ENCODE measurements at regions of chr22 and their contacts with region 1.

Region 1: DNA sequence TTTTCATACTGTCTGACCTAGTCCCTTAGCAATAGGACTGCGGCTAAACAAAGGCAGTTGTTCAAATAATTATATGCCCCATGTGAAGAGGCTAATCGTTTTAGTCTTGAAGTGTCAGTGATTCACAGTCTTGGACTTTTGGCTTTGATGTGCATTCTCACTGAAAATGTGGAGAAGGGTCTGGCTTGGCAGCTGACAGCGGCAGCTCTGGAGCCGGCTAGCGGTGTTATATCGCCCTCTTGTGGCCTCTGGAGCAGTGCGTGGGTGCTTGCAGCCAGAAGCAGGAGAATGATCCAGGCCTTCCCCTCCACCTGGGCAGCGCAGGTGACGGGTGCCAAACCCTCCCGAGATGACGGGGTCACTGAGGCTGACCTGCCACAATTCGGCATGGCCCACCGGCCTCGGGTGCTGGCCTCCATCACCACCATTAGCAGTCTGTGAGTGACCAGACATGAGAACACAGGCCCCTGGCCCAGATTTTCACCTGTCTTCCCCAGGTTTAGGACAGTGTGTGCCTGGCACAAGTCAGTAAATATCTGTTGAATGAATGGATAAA is 90.3 kb upstream of the PITPNB start:
- DNase-seq: peak; percentile 78 to 80
- H3K4me3 ChIP-seq: no peak overlapping the region
- H3K27ac ChIP-seq: no peak overlapping the region
- H3K4me1 ChIP-seq: no peaks in the 10 kb centered on the region
- H3K27me3 ChIP-seq: no peaks in the 10 kb centered on the region
- CTCF ChIP-seq: peak; percentile 90 to 98 (median 95)
- POLR2A ChIP-seq: no peak

Region 2: DNA sequence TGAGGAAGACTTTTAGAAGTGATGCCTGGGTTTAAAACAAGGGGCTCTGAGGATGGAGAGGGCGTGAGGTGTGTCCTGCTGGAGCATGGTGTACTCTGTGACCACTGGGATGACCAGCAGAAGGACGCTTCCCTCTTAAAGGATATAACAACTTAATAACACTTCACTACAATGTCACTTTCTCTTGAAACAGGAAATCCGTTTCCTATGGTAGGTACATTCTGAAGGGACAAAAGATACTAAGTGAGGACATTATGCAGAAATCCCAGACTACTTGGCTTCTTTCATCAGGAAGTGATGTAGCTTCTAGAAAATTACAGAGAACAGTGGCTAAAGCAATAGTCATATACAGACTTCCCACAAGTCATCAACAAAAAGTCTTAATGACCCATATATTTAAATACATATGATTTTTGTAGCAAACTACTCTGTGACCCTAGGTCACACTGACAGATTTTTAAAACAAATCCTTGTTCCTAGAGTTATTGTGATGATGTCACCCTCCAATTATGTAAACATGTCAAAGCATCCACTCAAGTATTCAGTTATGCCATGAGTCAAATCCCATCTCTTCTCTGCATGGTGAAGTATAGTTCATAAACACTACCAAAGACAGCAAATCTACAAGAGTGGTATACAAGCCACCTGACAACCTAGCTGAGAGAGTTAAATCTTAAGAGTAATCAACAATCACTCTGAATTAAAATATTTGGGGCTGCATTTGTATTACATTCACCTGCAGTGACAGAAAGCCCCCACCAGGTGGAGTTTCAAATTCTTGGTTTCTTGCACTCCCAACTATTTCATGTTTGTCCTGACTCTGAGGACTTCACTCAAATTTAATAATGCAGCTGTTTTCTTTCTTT is 123.1 kb before region 1 on chr22:
- intact Hi-C with region 1: loop called (anchors 5 kb)
- DNase-seq: peak in 1 of 2 donors; percentile 57
- H3K4me3 ChIP-seq: no peak overlapping the region
- H3K27ac ChIP-seq: peak overlapping the region; percentile 36 to 71
- H3K4me1 ChIP-seq: peaks cover 0 to 5% of the 10 kb centered on the region in 2 donors
- H3K27me3 ChIP-seq: no peaks in the 10 kb centered on the region
- CTCF ChIP-seq: peak; percentile 72 to 86 (median 82)
- POLR2A ChIP-seq: no peak

Region 3: GRCh38 chr22:27919222-27919941 is 90.0 kb before region 1 on chr22 and contains the start of gene PITPNB:
- intact Hi-C with region 1: no loop called
- DNase-seq: peak; percentile 97 to 99
- H3K4me3 ChIP-seq: peak within 1 kb of the TSS; percentile 88 to 95
- H3K27ac ChIP-seq: peak within 1 kb of the TSS; percentile 96 to 98
- H3K4me1 ChIP-seq: peaks cover 0 to 3% of the 10 kb centered on the region in 2 donors
- H3K27me3 ChIP-seq: no peaks in the 10 kb centered on the region
- CTCF ChIP-seq: peak in 1 of 4 experiments; percentile 12
- POLR2A ChIP-seq: peak; percentile 80 to 94
- total RNA-seq, gene PITPNB: 47.9 to 99.2 (median 62.5) TPM

Region 4: DNA sequence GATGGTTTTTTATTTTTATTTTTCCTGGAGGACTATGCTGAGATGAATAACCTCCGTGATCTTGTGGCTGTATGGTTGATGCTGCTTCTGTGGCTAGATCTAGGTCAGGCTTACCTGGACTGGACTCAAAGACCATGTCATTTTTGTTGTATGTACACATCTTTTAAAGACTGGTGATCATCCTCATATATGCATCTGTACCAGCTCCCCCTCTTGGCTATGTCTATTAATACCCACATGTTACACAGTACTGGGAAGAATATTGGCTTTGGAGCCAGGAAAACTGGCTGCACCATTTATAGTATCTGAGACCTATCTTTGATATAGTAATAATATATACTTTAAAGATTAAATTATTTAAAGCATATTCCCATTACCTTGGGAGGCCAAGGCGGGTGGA is 71.9 kb before region 1 on chr22:
- intact Hi-C with region 1: no loop called
- DNase-seq: no peak
- H3K4me3 ChIP-seq: no peak overlapping the region
- H3K27ac ChIP-seq: no peak overlapping the region
- H3K4me1 ChIP-seq: no peaks in the 10 kb centered on the region
- H3K27me3 ChIP-seq: no peaks in the 10 kb centered on the region
- CTCF ChIP-seq: no peak
- POLR2A ChIP-seq: no peak

Region 5: GRCh38 chr22:28171115-28171514 is 161.8 kb after region 1 on chr22:
- intact Hi-C with region 1: no loop called
- DNase-seq: no peak
- H3K4me3 ChIP-seq: no peak overlapping the region
- H3K27ac ChIP-seq: no peak overlapping the region
- H3K4me1 ChIP-seq: peaks cover 5 to 6% of the 10 kb centered on the region in 2 donors
- H3K27me3 ChIP-seq: no peaks in the 10 kb centered on the region
- CTCF ChIP-seq: no peak
- POLR2A ChIP-seq: no peak